GM12878 (cell line): ENCODE measurements at regions of chr16 and their contacts with region 1.

Region 1: GRCh38 chr16:55179852-55180585 is 144.0 kb upstream of the IRX6 start:
- DNase-seq: no peak
- ATAC-seq: no peak
- H3K4me3 ChIP-seq: no peak overlapping the region
- H3K27ac ChIP-seq: no peak overlapping the region
- H3K4me1 ChIP-seq: no peaks in the 10 kb centered on the region
- H3K27me3 ChIP-seq: no peaks in the 10 kb centered on the region
- CTCF ChIP-seq: no peak
- EP300 ChIP-seq: no peak
- POLR2A ChIP-seq: no peak
- RAD21 ChIP-seq: no peak

Region 2: DNA sequence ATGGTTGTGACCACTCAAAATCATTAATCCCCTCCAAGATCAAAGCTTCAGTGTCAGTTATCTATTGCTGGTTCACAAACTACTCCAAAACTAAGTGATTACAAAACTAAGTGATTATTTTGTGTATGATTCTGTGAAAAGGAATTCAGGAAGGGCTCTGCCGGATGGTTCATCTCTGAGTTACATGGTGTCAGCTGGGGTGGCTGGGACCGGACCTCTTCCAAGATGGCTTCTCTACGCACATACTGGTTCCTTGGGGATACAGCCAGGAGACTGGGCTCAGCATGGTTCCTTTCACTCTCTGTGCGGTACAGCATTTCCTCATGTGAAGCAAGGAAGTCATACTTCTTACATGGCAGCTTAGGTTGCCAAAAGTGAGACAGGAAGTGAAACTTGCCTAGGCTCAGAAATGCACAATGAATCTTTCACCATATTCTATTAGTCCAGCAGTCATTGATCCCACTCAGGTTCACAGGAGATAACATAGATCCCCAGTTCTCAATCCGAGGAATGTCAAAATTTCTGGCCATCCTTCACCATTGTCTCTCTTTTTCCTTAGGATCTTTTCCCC is 46.0 kb after region 1 on chr16:
- CTCF ChIA-PET with region 1: no interaction called
- POLR2A ChIA-PET with region 1: no interaction called
- RAD21 ChIA-PET with region 1: no interaction called
- SMC1A ChIA-PET with region 1: no interaction called
- in situ Hi-C with region 1: loop called (anchors 5 kb)
- intact Hi-C with region 1: no loop called
- DNase-seq: no peak
- ATAC-seq: no peak
- H3K4me3 ChIP-seq: no peak overlapping the region
- H3K27ac ChIP-seq: no peak overlapping the region
- H3K4me1 ChIP-seq: no peaks in the 10 kb centered on the region
- H3K27me3 ChIP-seq: no peaks in the 10 kb centered on the region
- CTCF ChIP-seq: no peak
- EP300 ChIP-seq: no peak
- POLR2A ChIP-seq: no peak
- RAD21 ChIP-seq: no peak